ENCODE measurements at regions of chr11 and their contacts with region 1.

Region 1: DNA sequence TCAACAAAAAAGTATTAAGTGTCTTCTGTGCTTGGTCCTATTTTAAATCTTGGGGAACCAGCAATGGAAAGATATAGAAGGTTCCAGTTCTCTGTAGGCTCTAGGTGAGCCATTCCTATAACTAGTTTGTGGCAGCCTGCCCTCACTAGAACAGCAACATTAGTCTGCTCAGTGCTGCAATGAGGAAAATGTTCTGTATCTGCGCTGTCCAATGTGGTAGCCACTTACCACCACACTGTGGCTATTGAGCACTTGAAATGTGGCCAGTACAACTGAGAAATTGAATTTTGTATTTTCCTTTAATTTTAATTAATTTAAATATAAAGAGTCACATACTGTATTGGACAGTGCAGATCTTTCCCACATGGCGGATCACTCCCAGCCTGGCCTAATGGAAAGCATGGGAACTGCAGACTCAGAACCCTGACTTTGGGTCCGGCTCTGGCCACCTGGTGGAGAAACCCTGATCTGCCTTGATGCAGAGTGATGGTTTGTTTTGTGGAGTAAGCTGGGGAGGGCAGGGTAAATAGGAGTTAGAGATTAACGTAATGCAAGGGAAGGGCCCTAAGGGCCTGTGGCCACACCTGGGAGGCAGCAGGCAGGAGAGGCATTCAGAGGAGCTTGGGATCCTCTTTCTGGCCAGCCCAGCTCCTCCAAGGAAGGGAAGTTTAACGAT is 101.0 kb downstream of the ME3 start:
- DNase-seq: no peak
- H3K4me3 ChIP-seq: no peak overlapping the region
- H3K27ac ChIP-seq: no peak overlapping the region
- H3K4me1 ChIP-seq: peaks cover 0 to 16% (median 4%) of the 10 kb centered on the region in 4 donors
- H3K27me3 ChIP-seq: no peaks in the 10 kb centered on the region
- CTCF ChIP-seq: no peak

Region 2: GRCh38 chr11:86483940-86484794 is 87.2 kb before region 1 on chr11:
- intact Hi-C with region 1: loop called (anchors 10 kb)
- DNase-seq: peak; percentile 82 to 86
- H3K4me3 ChIP-seq: no peak overlapping the region
- H3K27ac ChIP-seq: peak overlapping the region; percentile 45 to 65
- H3K4me1 ChIP-seq: peaks cover 0 to 44% (median 20%) of the 10 kb centered on the region in 4 donors
- H3K27me3 ChIP-seq: no peaks in the 10 kb centered on the region
- CTCF ChIP-seq: no peak